Panc1 (cell line): ENCODE measurements at regions of chr1 and their contacts with region 1.

Region 1: DNA sequence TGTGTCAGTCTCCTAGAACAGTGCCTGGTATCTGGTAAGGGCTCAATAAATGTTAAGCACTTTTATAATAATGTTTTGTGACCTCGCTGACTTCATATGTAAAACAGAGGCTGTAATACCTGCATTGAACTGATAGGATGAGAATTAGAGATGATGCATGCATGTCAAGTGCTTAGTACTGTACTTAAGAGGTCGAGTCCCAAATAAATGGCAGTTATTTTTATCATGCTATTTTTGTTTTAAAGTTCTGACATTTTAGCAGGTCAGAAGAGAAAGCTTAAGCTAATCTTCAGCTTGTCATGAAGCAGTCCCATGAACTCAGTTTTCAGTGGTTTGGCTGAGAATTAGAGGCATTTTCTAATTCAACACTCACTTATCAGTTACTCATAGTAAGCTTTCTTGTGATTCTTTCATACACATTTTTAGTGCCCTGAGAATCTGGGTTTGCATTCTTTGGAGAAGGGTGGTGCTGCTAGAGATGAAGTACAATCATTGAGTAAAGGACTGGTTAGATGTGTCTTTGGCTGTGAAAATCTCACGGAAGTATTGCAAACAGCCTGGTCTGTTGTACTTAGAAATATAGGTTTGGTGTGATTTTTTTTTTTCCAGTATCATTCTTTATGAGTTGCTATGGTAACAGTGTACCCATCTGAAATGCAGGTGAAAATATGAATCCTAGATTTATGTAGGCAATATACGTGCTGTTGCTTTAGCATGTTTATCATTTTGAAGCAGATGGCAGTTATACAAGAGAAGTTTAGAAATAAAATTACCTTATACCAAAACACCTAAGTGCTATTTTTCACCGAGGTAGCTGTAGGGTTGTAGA is 75.6 kb upstream of the RAVER2 start:
- DNase-seq: no peak
- ATAC-seq: no peak
- H3K4me3 ChIP-seq: no peak overlapping the region
- H3K27ac ChIP-seq: no peak overlapping the region
- H3K4me1 ChIP-seq: no peaks in the 10 kb centered on the region
- H3K27me3 ChIP-seq: no peaks in the 10 kb centered on the region
- CTCF ChIP-seq: no peak

Region 2: GRCh38 chr1:64163970-64164369 is 505.3 kb before region 1 on chr1:
- CTCF ChIA-PET with region 1: no interaction called
- POLR2A ChIA-PET with region 1: no interaction called
- in situ Hi-C with region 1: no loop called
- intact Hi-C with region 1: no loop called
- DNase-seq: no peak
- ATAC-seq: no peak
- H3K4me3 ChIP-seq: no peak overlapping the region
- H3K27ac ChIP-seq: no peak overlapping the region
- H3K4me1 ChIP-seq: no peaks in the 10 kb centered on the region
- H3K27me3 ChIP-seq: no peaks in the 10 kb centered on the region
- CTCF ChIP-seq: peak; percentile 70

Region 3: DNA sequence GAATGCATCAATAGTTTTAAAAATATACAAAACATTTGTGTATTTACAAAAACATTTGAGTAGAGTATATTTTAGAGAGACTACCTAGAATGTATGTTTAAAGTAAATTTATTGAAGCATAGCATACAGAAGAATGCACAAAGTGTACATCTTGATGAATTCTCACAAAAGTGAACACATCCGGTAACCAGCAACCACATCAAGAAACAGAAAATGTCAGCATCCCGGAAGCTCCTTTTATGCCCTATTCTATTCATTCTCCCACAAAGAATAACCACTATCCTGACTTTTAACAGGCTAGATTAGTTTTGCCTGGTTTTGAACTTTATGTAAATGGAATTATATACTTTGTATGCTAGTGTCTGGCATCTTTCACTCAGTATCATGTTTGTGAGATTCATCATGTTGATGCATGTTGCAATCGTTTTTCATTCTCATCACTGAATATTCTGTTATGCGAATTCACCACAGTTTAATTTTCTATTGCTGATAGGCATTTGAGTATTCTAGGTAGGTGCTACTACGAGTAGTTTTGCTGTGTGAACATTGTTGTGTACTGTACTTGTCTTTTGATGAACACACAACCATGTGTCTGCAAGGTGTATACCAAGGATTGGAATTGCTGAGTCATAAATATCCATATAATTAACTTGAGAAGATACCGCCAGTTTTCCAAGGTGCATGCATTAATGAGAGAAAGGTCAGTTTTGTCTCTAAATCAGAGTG is 124.0 kb before region 1 on chr1:
- CTCF ChIA-PET with region 1: no interaction called
- POLR2A ChIA-PET with region 1: interaction called, 17 read pairs
- in situ Hi-C with region 1: no loop called
- intact Hi-C with region 1: no loop called
- DNase-seq: no peak
- ATAC-seq: no peak
- H3K4me3 ChIP-seq: no peak overlapping the region
- H3K27ac ChIP-seq: no peak overlapping the region
- H3K4me1 ChIP-seq: peaks cover 2% of the 10 kb centered on the region
- H3K27me3 ChIP-seq: no peaks in the 10 kb centered on the region
- CTCF ChIP-seq: no peak

Region 4: DNA sequence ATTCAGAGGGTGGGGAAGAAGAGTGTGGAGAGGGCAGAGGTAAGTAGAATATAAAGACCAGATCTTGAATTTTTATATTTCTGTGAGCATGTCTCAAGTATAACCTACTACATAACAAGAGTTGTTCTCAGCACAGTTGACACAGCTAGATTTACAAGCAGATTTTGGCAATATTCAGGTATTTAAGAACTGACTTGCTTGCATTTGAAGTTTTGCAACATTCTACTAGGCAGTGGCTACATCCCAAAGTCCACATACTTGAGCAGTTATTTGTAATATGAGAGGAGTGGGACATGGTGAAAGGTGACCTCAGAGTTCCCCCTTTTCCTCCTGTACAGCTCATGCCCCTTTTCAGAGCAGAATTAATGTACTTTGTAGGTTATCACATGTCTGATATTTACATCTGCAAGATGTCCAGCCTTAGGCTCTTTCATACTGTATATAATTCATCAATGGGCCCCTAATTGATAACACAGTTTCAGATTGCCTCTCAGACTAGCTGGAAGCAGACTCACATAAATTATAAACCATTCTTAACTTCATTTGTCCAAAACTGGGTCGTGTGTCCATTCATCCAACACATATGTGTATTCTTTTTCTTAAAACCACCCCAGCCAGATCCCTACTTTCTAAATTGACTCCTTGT is 61.2 kb before region 1 on chr1:
- CTCF ChIA-PET with region 1: no interaction called
- POLR2A ChIA-PET with region 1: no interaction called
- in situ Hi-C with region 1: no loop called
- intact Hi-C with region 1: no loop called
- DNase-seq: no peak
- ATAC-seq: no peak
- H3K4me3 ChIP-seq: no peak overlapping the region
- H3K27ac ChIP-seq: no peak overlapping the region
- H3K4me1 ChIP-seq: no peaks in the 10 kb centered on the region
- H3K27me3 ChIP-seq: no peaks in the 10 kb centered on the region
- CTCF ChIP-seq: no peak